Activated T-helper 1 cell treated with anti-CD3 and anti-CD28 coated beads, Interleukin-12 subunit alpha, Interleukin-12 subunit beta, Interleukin-2, Interleukin-4 antibody, amounts not matched to agents 30 ng/mL and 10 ng/mL and 1 ng/mL, durations not matched to agents 14 hours and 24 hours and 36 hours (primary cell): ENCODE measurements at regions of chr1 and their contacts with region 1.

Region 1: GRCh38 chr1:25430666-25431505 is at the start of gene MACO1:
- DNase-seq: peak; percentile 96
- H3K4me3 Mint-ChIP-seq: peak within 1 kb of the TSS; percentile 97
- H3K27ac Mint-ChIP-seq: peak within 1 kb of the TSS; percentile 98
- H3K4me1 Mint-ChIP-seq: peaks cover 48% of the 10 kb centered on the region
- H3K27me3 Mint-ChIP-seq: peaks cover 3% of the 10 kb centered on the region
- total RNA-seq, gene MACO1: 14.2 and 14.3 TPM in 2 replicates

Region 2: DNA sequence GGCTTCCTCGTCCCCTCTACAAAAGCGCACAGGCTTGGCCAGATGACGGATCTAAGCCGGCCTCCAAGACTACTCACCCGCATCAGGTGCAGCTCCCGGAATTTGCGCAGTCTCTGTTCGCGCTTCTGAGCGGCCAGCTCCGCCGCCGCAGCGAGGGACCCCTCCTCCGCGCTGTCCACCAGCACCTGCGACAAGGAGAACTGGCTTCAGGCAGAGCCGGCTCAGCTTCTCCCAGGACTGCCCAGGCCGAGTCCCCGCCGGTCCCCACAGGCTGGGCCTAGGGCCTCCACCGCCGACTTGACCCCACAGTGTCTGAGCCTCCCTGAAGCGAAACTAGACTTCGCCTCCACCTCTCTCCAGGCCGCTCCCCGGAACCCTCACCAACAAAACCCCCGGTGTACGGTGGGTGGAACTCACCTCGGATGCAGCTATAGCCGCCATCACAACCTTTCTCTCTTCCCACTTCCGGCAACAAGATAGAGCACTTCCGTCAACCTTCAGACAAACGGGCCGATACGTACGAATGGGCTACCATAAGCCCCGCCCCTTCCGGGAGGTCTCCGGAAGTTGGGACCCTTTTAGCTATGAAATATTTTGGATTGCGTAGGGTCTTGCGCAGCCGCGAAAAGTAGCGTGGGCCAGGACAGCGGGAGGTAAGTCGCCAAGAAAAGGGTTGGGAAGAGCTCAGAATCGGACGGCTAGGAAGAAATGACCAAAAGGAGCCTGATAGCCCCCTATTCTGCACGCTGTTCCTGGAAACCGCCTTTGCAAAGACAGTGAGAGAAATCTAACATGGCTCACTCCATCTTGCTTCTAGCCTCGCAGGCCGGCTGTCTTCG is 198.6 kb before region 1 on chr1 and contains the start of gene SYF2:
- intact Hi-C with region 1: no loop called
- DNase-seq: peak; percentile 83
- H3K4me3 Mint-ChIP-seq: no peak within 1 kb of the TSS
- H3K27ac Mint-ChIP-seq: no peak within 1 kb of the TSS
- H3K4me1 Mint-ChIP-seq: peaks cover 32% of the 10 kb centered on the region
- H3K27me3 Mint-ChIP-seq: no peaks in the 10 kb centered on the region
- total RNA-seq, gene SYF2: 40.7 and 41.4 TPM in 2 replicates

Region 3: GRCh38 chr1:25247024-25247828 is 183.7 kb before region 1 on chr1 and contains the start of gene RSRP1:
- intact Hi-C with region 1: loop called (anchors 1 kb)
- DNase-seq: peak; percentile 100
- H3K4me3 Mint-ChIP-seq: peak within 1 kb of the TSS; percentile 92
- H3K27ac Mint-ChIP-seq: peak within 1 kb of the TSS; percentile 99
- H3K4me1 Mint-ChIP-seq: peaks cover 50% of the 10 kb centered on the region
- H3K27me3 Mint-ChIP-seq: peaks cover 2% of the 10 kb centered on the region
- total RNA-seq, gene RSRP1: 123 and 129 TPM in 2 replicates

Region 4: DNA sequence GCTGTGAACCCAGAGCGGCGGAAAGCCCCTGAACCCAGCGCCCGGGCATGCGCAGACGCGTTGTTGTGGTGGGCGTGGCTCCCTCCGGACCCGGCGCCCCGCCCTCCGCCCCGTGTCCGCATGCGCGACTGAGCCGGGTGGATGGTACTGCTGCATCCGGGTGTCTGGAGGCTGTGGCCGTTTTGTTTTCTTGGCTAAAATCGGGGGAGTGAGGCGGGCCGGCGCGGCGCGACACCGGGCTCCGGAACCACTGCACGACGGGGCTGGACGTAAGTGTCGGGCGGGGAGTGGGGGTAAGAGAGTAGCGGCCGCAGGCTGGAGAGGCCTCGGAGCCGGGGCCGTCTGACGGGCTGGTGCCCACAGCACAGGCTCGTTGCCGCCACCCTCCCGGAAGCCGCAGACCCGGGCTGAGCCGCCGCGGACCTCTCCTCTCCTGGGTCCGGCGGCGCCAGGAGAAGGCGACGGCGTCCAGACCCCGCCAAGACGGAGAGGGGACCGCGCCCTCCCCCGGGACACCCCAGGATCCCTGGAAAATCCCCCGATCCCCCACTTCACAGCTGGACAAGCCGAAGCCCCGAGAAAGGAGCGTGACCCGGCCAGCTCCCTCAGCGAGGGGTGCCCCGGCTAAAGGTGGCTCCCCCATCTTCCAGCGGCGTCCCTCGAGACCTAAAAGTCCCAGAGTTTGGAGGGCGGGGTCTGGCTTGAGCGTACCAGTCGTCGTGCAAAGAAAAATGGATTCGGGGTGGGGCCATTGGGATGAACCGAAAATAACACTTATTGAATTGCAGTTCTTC is 92.5 kb before region 1 on chr1 and contains the start of gene TMEM50A:
- intact Hi-C with region 1: loop called (anchors 2 kb)
- DNase-seq: peak; percentile 96
- H3K4me3 Mint-ChIP-seq: peak within 1 kb of the TSS; percentile 94
- H3K27ac Mint-ChIP-seq: peak within 1 kb of the TSS; percentile 94
- H3K4me1 Mint-ChIP-seq: peaks cover 36% of the 10 kb centered on the region
- H3K27me3 Mint-ChIP-seq: no peaks in the 10 kb centered on the region
- total RNA-seq, gene TMEM50A: 99.8 and 102 TPM in 2 replicates

Region 5: DNA sequence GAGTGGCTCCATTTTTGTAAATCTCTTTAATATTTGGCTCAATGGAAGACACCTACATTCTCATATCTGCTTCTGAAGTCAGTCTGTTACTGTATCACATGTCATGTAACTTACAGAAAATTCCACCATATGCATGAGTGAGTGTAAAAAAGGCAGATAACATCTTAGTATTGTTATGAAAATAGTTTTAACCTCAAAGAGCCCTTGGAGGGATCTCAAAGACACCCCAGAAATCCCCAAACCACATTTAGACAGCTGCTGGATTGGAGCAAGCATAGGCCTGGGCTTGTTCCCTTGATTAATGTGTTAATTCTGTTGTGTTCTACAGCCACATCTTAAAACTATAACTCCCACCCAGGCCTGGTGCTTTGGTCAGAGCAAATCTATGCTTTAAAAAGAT is 16.7 kb after region 1 on chr1:
- intact Hi-C with region 1: loop called (anchors 1 kb)
- DNase-seq: peak; percentile 30
- H3K4me3 Mint-ChIP-seq: no peak overlapping the region
- H3K27ac Mint-ChIP-seq: peak overlapping the region; percentile 63
- H3K4me1 Mint-ChIP-seq: peaks cover 31% of the 10 kb centered on the region
- H3K27me3 Mint-ChIP-seq: peaks cover 2% of the 10 kb centered on the region

Region 6: GRCh38 chr1:25476186-25477097 is 45.6 kb after region 1 on chr1:
- intact Hi-C with region 1: loop called (anchors 1 kb)
- DNase-seq: no peak
- H3K4me3 Mint-ChIP-seq: no peak overlapping the region
- H3K27ac Mint-ChIP-seq: peak overlapping the region; percentile 72
- H3K4me1 Mint-ChIP-seq: peaks cover 46% of the 10 kb centered on the region
- H3K27me3 Mint-ChIP-seq: no peaks in the 10 kb centered on the region

Region 7: DNA sequence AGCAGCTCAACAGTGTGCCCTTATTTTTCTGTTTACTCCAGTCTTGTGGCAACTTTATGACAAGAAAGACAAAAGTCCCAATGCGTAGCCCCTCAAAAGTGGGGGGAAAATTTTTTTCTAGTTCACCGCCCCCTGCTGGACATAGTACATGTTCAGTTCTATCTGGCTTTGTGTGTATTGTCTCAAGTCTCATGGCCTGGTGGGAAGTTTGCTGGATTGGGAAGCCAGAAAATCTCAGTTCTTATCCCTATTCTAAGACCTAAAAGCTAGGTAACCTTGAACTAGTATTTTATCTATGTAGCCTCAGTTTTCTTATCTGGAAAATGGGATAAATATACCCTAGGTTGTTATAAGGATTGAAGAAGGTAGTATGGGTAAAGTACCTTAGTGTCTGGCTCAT is 56.7 kb after region 1 on chr1:
- intact Hi-C with region 1: no loop called
- DNase-seq: no peak
- H3K4me3 Mint-ChIP-seq: no peak overlapping the region
- H3K27ac Mint-ChIP-seq: no peak overlapping the region
- H3K4me1 Mint-ChIP-seq: peaks cover 4% of the 10 kb centered on the region
- H3K27me3 Mint-ChIP-seq: no peaks in the 10 kb centered on the region

Region 8: DNA sequence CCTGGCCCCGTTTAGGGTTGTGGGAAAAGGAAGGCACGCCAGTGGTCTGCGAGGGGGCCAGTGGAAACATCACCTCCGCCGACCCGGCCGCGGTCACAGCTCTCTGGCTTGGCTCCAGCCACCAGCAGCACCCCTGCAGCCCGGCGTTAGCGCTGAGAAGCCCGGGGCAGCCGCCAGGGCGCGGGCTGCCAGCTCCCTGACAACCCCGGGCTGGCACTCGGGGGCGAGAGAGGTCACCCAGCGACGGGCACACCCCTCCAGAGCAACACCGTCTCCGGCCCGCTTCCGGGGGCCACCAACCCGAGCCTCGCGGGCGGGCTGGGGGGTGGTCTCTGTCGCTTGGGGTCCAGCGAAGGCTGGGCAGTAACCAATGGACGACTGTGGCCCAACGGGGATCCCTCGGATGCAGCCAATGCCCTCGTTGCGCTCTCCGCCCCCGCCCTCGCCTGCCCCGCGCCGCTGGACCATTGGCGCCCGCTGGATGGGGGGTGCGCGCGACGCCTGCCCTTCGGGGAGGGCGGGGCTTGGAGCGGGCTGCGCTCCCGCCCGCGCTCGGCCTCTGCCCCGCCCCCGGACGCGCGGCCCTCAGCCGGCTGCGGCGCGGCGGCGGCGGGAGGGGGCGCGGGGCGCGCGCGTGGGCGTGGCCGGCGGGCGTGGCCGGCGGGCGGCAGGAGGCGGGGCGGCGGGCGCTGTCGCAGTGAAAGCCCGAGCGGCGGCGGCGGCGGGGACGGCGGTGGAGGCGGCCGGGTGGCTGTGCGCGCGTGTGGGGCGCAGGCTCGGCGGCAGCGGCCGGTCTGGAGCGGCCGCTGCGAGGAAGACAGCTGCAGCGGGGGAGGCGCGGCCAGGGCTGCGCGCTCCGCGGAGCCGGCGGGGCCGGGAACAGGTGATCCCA is 185.5 kb after region 1 on chr1 and contains the start of gene MAN1C1:
- intact Hi-C with region 1: loop called (anchors 5 kb)
- DNase-seq: peak; percentile 76
- H3K4me3 Mint-ChIP-seq: peak within 1 kb of the TSS; percentile 63
- H3K27ac Mint-ChIP-seq: peak within 1 kb of the TSS; percentile 57
- H3K4me1 Mint-ChIP-seq: peaks cover 45% of the 10 kb centered on the region
- H3K27me3 Mint-ChIP-seq: peaks cover 71% of the 10 kb centered on the region
- total RNA-seq, gene MAN1C1: 0.83 and 0.98 TPM in 2 replicates

Region 9: DNA sequence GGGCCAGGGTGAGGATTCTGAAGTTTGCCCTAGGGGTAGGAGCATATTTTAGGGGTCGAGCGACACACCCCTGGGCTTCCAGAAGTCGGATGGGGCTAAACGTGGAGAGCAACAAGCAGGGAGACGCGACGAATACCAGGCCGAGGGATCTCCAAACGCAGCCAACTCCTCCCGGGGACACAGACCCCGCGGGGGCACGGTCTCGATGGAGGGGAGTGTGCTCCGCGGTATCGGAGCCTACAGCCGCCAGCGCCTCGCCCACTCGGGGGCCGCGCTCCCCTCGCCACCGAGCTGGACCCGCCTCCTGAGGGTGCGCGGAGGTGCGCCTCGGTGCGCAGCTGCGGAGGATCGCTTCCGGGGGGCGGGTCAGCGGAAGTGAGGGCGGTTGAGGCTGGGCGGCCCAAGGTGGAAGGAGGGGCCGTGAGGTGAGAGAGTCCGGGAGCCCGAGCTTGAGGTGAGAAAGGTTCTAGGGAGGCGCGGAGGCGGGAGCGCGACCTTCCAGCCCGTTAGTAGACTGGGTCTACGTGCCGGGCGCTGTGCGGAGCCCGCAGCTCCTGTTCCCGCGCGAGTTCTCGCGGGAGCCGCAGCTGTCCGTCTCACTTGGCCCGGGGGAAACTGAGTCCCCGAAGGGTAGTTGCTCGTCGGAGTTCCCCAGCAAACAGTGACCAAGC is 388.8 kb after region 1 on chr1 and contains the start of gene MTFR1L:
- intact Hi-C with region 1: loop called (anchors 1 kb)
- DNase-seq: peak; percentile 93
- H3K4me3 Mint-ChIP-seq: peak within 1 kb of the TSS; percentile 97
- H3K27ac Mint-ChIP-seq: peak within 1 kb of the TSS; percentile 93
- H3K4me1 Mint-ChIP-seq: peaks cover 35% of the 10 kb centered on the region
- H3K27me3 Mint-ChIP-seq: no peaks in the 10 kb centered on the region
- total RNA-seq, gene MTFR1L: 29.3 and 30.0 TPM in 2 replicates